ENCODE measurements at regions of chr10 and their contacts with region 1.

Region 1: GRCh38 chr10:93334901-93335327 is 147.2 kb downstream of the MYOF start:
- DNase-seq: peak; percentile 87 to 96
- H3K4me3 ChIP-seq: no peak overlapping the region
- H3K27ac ChIP-seq: peak overlapping the region; percentile 83
- H3K4me1 ChIP-seq: peaks cover 30% of the 10 kb centered on the region
- H3K27me3 ChIP-seq: no peaks in the 10 kb centered on the region
- CTCF ChIP-seq: no peak

Region 2: GRCh38 chr10:92615515-92615914 is 719.4 kb before region 1 on chr10:
- CTCF ChIA-PET with region 1: no interaction called
- POLR2A ChIA-PET with region 1: interaction called, 13 read pairs
- intact Hi-C with region 1: no loop called
- DNase-seq: no peak
- H3K4me3 ChIP-seq: no peak overlapping the region
- H3K27ac ChIP-seq: no peak overlapping the region
- H3K4me1 ChIP-seq: no peaks in the 10 kb centered on the region
- H3K27me3 ChIP-seq: no peaks in the 10 kb centered on the region
- CTCF ChIP-seq: no peak

Region 3: DNA sequence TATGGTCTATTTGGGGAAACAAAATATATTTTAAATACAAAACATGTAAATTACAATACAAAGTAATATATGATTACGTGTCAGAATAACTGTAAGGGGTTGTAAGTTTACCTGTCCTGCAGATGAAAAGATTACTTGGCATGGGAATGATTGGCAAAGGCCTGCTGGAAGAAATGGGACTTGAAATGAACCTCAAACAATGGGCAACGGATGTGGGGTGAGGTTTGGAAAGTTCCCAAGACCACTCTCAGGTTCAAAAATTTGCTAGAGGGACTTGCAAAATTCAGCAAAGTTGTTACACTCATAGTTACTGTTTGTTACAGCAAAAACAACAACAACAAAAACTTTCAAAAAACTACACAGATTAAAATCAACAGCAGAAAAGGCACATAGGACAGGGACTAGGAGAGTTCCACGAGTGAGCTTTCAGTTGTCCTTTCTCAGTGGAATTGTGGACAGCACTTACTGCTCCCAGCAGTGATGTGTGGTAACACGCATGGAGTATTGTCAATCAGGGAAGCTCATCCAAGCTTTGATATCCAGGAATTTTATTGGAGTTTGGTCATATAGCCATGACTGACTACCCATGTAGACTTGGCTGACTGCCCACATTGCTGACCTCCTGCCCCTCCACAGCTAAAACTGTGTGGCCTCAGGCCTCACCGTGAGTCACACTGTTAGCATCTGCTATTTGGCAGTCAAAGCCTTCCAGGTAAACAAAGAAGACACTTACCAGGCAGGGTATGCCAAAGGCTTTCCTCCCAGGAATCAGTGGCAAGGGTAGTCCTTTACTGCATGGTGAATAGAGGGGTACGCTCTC is 442.8 kb before region 1 on chr10:
- CTCF ChIA-PET with region 1: no interaction called
- POLR2A ChIA-PET with region 1: no interaction called
- intact Hi-C with region 1: loop called (anchors 10 kb)
- DNase-seq: peak; percentile 88 to 95
- H3K4me3 ChIP-seq: no peak overlapping the region
- H3K27ac ChIP-seq: peak overlapping the region; percentile 81
- H3K4me1 ChIP-seq: peaks cover 52% of the 10 kb centered on the region
- H3K27me3 ChIP-seq: no peaks in the 10 kb centered on the region
- CTCF ChIP-seq: no peak

Region 4: DNA sequence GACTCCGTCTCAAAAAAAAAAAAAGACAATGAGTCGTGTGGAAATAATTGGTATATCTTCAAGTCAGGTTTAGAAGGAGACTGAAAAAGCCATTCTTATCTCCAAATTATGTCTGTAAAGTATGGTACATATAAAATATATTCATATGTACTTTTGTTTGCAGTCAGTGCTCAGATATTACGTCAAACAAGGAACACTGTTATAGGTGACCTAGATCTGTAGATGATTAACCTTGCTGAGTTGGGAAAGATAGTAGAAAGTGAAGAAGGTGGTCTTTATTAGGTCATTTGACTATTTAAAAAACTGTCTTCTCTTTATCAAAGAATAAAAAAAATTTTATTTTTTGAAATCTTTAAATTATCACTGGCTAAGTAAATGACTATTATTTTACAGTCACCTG is 319.2 kb before region 1 on chr10:
- CTCF ChIA-PET with region 1: no interaction called
- POLR2A ChIA-PET with region 1: no interaction called
- intact Hi-C with region 1: no loop called
- DNase-seq: no peak
- H3K4me3 ChIP-seq: no peak overlapping the region
- H3K27ac ChIP-seq: no peak overlapping the region
- H3K4me1 ChIP-seq: no peaks in the 10 kb centered on the region
- H3K27me3 ChIP-seq: no peaks in the 10 kb centered on the region
- CTCF ChIP-seq: no peak

Region 5: GRCh38 chr10:93280699-93281366 is 54.1 kb before region 1 on chr10:
- CTCF ChIA-PET with region 1: no interaction called
- POLR2A ChIA-PET with region 1: no interaction called
- intact Hi-C with region 1: no loop called
- DNase-seq: no peak
- H3K4me3 ChIP-seq: no peak overlapping the region
- H3K27ac ChIP-seq: no peak overlapping the region
- H3K4me1 ChIP-seq: no peaks in the 10 kb centered on the region
- H3K27me3 ChIP-seq: no peaks in the 10 kb centered on the region
- CTCF ChIP-seq: no peak

Region 6: DNA sequence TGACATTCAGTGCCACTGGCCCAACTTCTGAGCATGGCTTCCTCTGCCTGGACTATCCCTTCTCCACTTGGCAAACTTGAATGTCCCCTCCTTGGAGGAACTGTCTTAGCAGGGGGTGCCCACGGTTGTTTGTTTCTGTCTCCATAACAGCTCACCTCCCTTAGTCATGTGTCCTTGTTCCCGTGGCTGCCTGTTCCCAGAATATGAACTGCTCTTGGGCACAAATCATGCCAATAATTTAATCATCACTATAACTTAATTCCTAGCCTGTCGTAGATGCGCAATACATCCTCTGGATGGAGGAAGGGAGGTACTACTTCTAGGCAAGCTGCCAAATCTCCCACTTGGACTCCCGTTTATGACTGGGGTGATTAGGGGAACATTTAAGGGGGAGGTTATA is 25.9 kb before region 1 on chr10:
- CTCF ChIA-PET with region 1: no interaction called
- POLR2A ChIA-PET with region 1: no interaction called
- intact Hi-C with region 1: no loop called
- DNase-seq: no peak
- H3K4me3 ChIP-seq: no peak overlapping the region
- H3K27ac ChIP-seq: no peak overlapping the region
- H3K4me1 ChIP-seq: no peaks in the 10 kb centered on the region
- H3K27me3 ChIP-seq: no peaks in the 10 kb centered on the region
- CTCF ChIP-seq: no peak

Region 7: DNA sequence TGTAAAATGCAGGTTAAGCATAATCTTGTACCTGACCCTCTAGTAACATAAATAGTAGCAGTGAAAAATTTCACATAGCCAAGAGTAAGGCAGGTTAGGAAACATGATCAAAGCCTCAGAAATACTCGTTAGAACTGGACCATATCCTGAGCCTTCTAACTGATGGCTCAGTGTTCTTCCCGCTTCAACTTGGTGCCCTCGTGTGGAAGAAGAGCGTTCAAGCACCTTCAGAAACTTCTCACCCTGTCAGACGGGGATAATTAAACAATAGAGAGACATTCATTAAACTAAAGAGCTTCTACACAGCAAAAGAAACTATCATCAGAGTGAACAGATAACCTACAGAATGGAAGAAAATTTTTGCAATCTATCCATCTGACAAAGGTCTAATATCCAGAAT is 22.8 kb after region 1 on chr10:
- CTCF ChIA-PET with region 1: no interaction called
- POLR2A ChIA-PET with region 1: no interaction called
- intact Hi-C with region 1: no loop called
- DNase-seq: no peak
- H3K4me3 ChIP-seq: no peak overlapping the region
- H3K27ac ChIP-seq: no peak overlapping the region
- H3K4me1 ChIP-seq: no peaks in the 10 kb centered on the region
- H3K27me3 ChIP-seq: no peaks in the 10 kb centered on the region
- CTCF ChIP-seq: peak; percentile 68

Measured in PC-9 (cell line).